ENCODE measurements at regions of chr17 and their contacts with region 1.

Region 1: DNA sequence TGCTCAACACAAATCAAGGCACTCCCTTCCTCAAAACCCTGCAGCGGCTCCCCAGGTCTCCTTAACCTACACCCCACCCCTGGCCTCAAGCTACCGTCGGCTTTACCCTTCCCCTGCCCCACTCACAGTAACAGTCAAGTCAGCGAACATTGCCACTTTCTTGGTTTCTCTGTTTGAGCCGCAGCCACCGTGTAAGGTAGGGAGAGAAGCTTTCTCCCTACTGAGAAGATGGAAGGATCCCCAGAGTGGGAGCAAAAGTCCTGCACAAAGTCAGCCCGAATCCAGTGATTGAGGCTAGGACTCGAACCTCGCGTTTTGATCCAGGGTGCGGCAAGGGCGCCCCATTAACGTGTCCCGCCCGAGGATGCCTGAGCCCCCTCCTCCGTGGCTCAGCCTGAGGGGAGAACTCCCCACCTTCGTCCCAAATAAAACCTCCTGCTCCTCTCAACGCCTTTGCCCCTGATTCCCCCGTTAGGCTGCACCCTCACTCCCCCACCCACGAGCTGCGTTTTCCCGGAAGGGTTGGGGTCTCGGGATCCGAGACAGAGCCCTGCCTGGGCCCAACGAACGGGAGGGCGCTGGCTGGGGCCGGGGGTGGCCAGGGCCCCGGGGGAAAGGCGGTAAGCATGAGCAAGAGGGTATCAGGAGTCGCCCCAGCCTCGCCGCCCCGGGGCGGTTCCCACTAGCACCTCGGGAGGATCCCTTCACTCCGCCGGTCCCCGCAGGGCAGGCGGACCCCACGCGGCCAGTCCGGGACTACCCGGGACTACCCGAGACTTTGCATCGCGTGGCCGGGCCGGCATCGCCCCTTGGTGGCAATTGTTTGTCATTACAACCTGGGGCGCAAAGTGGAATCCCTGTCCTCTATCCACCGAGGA is 9.9 kb upstream of the NAGS start:
- DNase-seq: no peak
- ATAC-seq: peak; percentile 94
- H3K4me3 ChIP-seq: peak overlapping the region; percentile 29 to 51
- H3K27ac ChIP-seq: no peak overlapping the region
- H3K4me1 ChIP-seq: no peaks in the 10 kb centered on the region
- H3K27me3 ChIP-seq: no peaks in the 10 kb centered on the region
- CTCF ChIP-seq: peak; percentile 90

Region 2: GRCh38 chr17:43864161-43864984 is 130.1 kb before region 1 on chr17:
- CTCF ChIA-PET with region 1: interaction called, 10 read pairs
- POLR2A ChIA-PET with region 1: interaction called, 3 read pairs
- in situ Hi-C with region 1: no loop called
- intact Hi-C with region 1: no loop called
- DNase-seq: no peak
- ATAC-seq: no peak
- H3K4me3 ChIP-seq: no peak overlapping the region
- H3K27ac ChIP-seq: no peak overlapping the region
- H3K4me1 ChIP-seq: no peaks in the 10 kb centered on the region
- H3K27me3 ChIP-seq: no peaks in the 10 kb centered on the region
- CTCF ChIP-seq: no peak

Region 3: GRCh38 chr17:43878260-43879175 is 116.0 kb before region 1 on chr17:
- CTCF ChIA-PET with region 1: no interaction called
- POLR2A ChIA-PET with region 1: interaction called, 3 read pairs
- in situ Hi-C with region 1: no loop called
- intact Hi-C with region 1: loop called (anchors 2 kb)
- DNase-seq: peak; percentile 43
- ATAC-seq: peak; percentile 96
- H3K4me3 ChIP-seq: no peak overlapping the region
- H3K27ac ChIP-seq: no peak overlapping the region
- H3K4me1 ChIP-seq: no peaks in the 10 kb centered on the region
- H3K27me3 ChIP-seq: no peaks in the 10 kb centered on the region
- CTCF ChIP-seq: peak; percentile 95

Region 4: GRCh38 chr17:43946069-43946696 is 48.3 kb before region 1 on chr17:
- CTCF ChIA-PET with region 1: interaction called, 7 read pairs
- POLR2A ChIA-PET with region 1: no interaction called
- in situ Hi-C with region 1: no loop called
- intact Hi-C with region 1: loop called (anchors 2 kb)
- DNase-seq: no peak
- ATAC-seq: no peak
- H3K4me3 ChIP-seq: no peak overlapping the region
- H3K27ac ChIP-seq: no peak overlapping the region
- H3K4me1 ChIP-seq: no peaks in the 10 kb centered on the region
- H3K27me3 ChIP-seq: no peaks in the 10 kb centered on the region
- CTCF ChIP-seq: no peak

Region 5: DNA sequence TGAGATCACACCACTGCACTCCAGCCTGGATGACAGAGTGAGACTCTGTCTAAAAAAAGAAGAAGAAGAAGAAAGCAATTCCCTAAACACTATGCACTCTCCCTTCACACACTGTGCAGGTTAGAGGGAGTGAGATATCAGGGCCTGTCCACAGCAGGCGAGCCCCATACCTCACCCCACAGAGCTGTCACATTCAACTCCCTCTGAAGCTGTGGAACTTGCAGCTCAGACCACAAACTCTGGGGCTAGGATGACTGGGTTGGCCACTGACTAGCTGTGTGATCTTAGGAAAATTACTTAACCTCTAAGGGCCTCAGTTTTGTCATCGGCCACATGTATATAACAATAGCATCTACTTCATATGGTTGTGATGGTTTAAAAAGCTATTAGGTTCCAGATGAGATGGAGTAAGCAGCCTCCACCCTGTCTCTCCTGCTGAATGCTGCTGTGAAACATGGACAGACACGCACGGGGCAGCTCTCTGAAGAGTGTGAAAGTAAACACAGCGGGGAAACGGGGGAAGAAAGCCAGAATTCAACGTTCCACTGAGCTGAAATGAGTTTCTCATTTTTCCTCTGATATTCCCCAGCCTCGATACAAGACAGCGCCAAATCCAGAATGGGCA is 27.1 kb before region 1 on chr17:
- CTCF ChIA-PET with region 1: no interaction called
- POLR2A ChIA-PET with region 1: interaction called, 14 read pairs
- in situ Hi-C with region 1: no loop called
- intact Hi-C with region 1: no loop called
- DNase-seq: no peak
- ATAC-seq: no peak
- H3K4me3 ChIP-seq: no peak overlapping the region
- H3K27ac ChIP-seq: no peak overlapping the region
- H3K4me1 ChIP-seq: no peaks in the 10 kb centered on the region
- H3K27me3 ChIP-seq: no peaks in the 10 kb centered on the region
- CTCF ChIP-seq: no peak

Region 6: GRCh38 chr17:44033861-44034408 is 39.4 kb after region 1 on chr17:
- CTCF ChIA-PET with region 1: no interaction called
- POLR2A ChIA-PET with region 1: no interaction called
- in situ Hi-C with region 1: no loop called
- intact Hi-C with region 1: no loop called
- DNase-seq: no peak
- ATAC-seq: no peak
- H3K4me3 ChIP-seq: no peak overlapping the region
- H3K27ac ChIP-seq: no peak overlapping the region
- H3K4me1 ChIP-seq: no peaks in the 10 kb centered on the region
- H3K27me3 ChIP-seq: no peaks in the 10 kb centered on the region
- CTCF ChIP-seq: no peak

Region 7: GRCh38 chr17:44344939-44345453 is 350.5 kb after region 1 on chr17 and contains the start of gene GRN:
- CTCF ChIA-PET with region 1: interaction called, 11 read pairs
- POLR2A ChIA-PET with region 1: no interaction called
- in situ Hi-C with region 1: no loop called
- intact Hi-C with region 1: no loop called
- DNase-seq: peak; percentile 87
- ATAC-seq: peak; percentile 98
- H3K4me3 ChIP-seq: peak within 1 kb of the TSS; percentile 95
- H3K27ac ChIP-seq: peak within 1 kb of the TSS; percentile 86
- H3K4me1 ChIP-seq: no peaks in the 10 kb centered on the region
- H3K27me3 ChIP-seq: no peaks in the 10 kb centered on the region
- CTCF ChIP-seq: no peak
- total RNA-seq, gene GRN: 304 TPM